ENCODE measurements at regions of chr17 and their contacts with region 1.

Region 1: GRCh38 chr17:44565866-44566443 is 8.7 kb downstream of the FZD2 start:
- DNase-seq: no peak
- H3K4me3 ChIP-seq: no peak overlapping the region
- H3K27ac ChIP-seq: no peak overlapping the region
- H3K4me1 ChIP-seq: no peaks in the 10 kb centered on the region
- H3K27me3 ChIP-seq: peaks cover 13 to 16% of the 10 kb centered on the region in 2 experiments
- CTCF ChIP-seq: peak; percentile 49 to 61
- POLR2A ChIP-seq: no peak

Region 2: GRCh38 chr17:44496815-44497214 is 69.1 kb before region 1 on chr17:
- CTCF ChIA-PET with region 1: no interaction called
- POLR2A ChIA-PET with region 1: no interaction called
- dilution Hi-C with region 1: no loop called
- intact Hi-C with region 1: no loop called
- DNase-seq: no peak
- H3K4me3 ChIP-seq: no peak overlapping the region
- H3K27ac ChIP-seq: no peak overlapping the region
- H3K4me1 ChIP-seq: peaks cover 6% of the 10 kb centered on the region
- H3K27me3 ChIP-seq: no peaks in the 10 kb centered on the region
- CTCF ChIP-seq: no peak
- POLR2A ChIP-seq: no peak

Region 3: GRCh38 chr17:44540246-44541084 is 25.5 kb before region 1 on chr17:
- CTCF ChIA-PET with region 1: no interaction called
- POLR2A ChIA-PET with region 1: no interaction called
- dilution Hi-C with region 1: no loop called
- intact Hi-C with region 1: no loop called
- DNase-seq: no peak
- H3K4me3 ChIP-seq: no peak overlapping the region
- H3K27ac ChIP-seq: no peak overlapping the region
- H3K4me1 ChIP-seq: peaks cover 6% of the 10 kb centered on the region
- H3K27me3 ChIP-seq: peaks cover 4 to 12% of the 10 kb centered on the region in 2 experiments
- CTCF ChIP-seq: no peak
- POLR2A ChIP-seq: no peak

Region 4: DNA sequence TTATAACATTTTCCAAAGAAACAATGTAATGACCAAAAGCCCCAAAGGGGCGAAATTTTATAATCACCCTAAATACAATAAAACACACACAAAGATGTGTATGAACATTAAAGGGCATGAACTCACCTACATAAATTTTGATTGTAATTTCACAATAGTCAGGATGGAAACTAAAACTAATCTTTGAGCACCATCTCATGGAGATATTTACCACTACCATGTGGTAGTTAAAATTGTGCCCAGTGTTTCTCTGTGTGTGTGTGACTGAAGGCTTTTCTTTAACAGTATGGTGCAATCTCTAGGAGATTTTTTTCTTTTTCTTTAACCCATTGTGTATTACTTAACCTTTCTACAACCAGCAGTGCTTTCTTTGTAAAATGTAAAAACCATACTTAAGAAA is 70.6 kb after region 1 on chr17:
- CTCF ChIA-PET with region 1: interaction called, 15 read pairs
- POLR2A ChIA-PET with region 1: no interaction called
- dilution Hi-C with region 1: no loop called
- intact Hi-C with region 1: loop called (anchors 2 kb)
- DNase-seq: peak; percentile 60
- H3K4me3 ChIP-seq: no peak overlapping the region
- H3K27ac ChIP-seq: no peak overlapping the region
- H3K4me1 ChIP-seq: no peaks in the 10 kb centered on the region
- H3K27me3 ChIP-seq: peaks cover 2 to 9% of the 10 kb centered on the region in 2 experiments
- CTCF ChIP-seq: peak in 1 of 2 donors; percentile 4
- POLR2A ChIP-seq: no peak